Esophagus muscularis mucosa (tissue), 4 donors: ENCODE measurements at regions of chr1 and their contacts with region 1.

Region 1: DNA sequence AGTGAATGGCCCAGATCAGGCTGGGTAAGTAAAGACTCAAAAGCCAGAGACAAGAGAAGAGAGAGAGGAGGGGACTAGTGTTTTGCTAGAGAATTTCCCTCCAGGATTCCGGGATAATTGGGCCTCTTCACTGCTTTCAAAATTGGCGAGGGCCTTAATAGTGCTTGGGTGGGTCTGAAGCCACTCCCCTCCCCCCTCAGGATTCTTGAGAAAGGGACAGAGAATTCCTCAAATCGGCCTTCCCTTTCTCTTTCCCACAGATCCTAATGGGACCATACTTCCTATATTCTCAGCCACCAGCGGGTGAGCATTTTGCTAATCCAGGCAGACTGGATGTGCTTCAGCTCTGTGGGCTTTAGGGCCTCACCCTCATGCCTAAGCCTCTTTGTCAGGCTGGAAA is 11.9 kb downstream of the SFN start:
- DNase-seq: no peak
- H3K4me3 ChIP-seq: no peak overlapping the region
- H3K27ac ChIP-seq: no peak overlapping the region
- H3K4me1 ChIP-seq: peaks cover 3 to 8% (median 6%) of the 10 kb centered on the region in 4 donors
- H3K27me3 ChIP-seq: no peaks in the 10 kb centered on the region
- CTCF ChIP-seq: no peak
- EP300 ChIP-seq: no peak
- POLR2A ChIP-seq: no peak

Region 2: DNA sequence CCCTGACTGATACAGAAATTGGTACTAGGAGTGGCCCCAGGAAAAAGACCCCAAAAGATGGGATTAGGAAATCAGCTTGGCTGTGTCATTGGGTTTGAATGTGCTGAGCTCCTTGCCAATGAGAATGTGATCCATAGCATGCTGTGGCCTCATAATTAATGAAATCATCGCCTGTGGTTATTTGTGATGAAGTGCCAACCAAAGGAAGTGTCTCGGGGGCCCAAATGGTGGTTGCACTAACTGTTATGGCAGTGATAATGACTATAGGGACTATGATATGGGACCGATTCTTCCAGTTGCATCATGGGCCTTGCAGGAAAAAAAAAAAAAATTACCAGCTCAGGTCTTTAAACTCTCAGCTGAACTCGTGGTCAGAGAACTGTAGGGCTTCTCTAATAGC is 63.8 kb before region 1 on chr1:
- intact Hi-C with region 1: loop called (anchors 5 kb)
- DNase-seq: no peak
- H3K4me3 ChIP-seq: no peak overlapping the region
- H3K27ac ChIP-seq: no peak overlapping the region
- H3K4me1 ChIP-seq: peaks cover 0 to 6% (median 2%) of the 10 kb centered on the region in 4 donors
- H3K27me3 ChIP-seq: no peaks in the 10 kb centered on the region
- CTCF ChIP-seq: no peak
- EP300 ChIP-seq: no peak
- POLR2A ChIP-seq: no peak

Region 3: DNA sequence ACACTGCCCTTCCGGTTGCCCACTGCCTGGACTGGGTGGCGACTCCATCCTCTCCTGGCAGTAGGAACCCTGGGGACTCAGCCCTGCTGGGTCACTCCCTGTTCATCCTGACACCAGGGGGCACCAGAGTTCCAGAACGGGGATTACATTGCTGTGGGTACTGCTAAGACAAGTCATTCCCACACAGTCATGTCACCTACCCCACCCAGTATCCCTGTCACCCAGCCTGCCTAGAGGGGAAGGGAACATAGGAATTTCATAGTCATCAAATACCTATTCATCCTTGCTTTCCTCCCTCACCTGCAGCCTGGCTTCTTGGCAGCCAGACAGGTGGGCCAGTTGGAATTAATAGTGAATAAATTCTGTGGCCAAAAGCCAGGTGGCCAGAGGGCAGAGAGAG is 21.7 kb before region 1 on chr1:
- intact Hi-C with region 1: loop called (anchors 1 kb)
- DNase-seq: peak; percentile 95
- H3K4me3 ChIP-seq: no peak overlapping the region
- H3K27ac ChIP-seq: no peak overlapping the region
- H3K4me1 ChIP-seq: peaks cover 2 to 28% (median 21%) of the 10 kb centered on the region in 4 donors
- H3K27me3 ChIP-seq: no peaks in the 10 kb centered on the region
- CTCF ChIP-seq: peak; percentile 82 to 86 (median 83)
- EP300 ChIP-seq: no peak
- POLR2A ChIP-seq: no peak